ENCODE measurements at regions of chr6 and their contacts with region 1.

Region 1: GRCh38 chr6:3654436-3655297 is 96.8 kb downstream of the PXDC1 start:
- DNase-seq: no peak
- H3K4me3 ChIP-seq: no peak overlapping the region
- H3K4me3 Mint-ChIP-seq: no peak overlapping the region
- H3K27ac Mint-ChIP-seq: no peak overlapping the region
- H3K4me1 ChIP-seq: peaks cover under 1% of the 10 kb centered on the region; the same call in 1 of the 2 replicates
- H3K4me1 Mint-ChIP-seq: peaks cover 3% of the 10 kb centered on the region
- H3K27me3 ChIP-seq: no peaks in the 10 kb centered on the region
- H3K27me3 Mint-ChIP-seq: no peaks in the 10 kb centered on the region
- CTCF ChIP-seq: no peak

Region 2: DNA sequence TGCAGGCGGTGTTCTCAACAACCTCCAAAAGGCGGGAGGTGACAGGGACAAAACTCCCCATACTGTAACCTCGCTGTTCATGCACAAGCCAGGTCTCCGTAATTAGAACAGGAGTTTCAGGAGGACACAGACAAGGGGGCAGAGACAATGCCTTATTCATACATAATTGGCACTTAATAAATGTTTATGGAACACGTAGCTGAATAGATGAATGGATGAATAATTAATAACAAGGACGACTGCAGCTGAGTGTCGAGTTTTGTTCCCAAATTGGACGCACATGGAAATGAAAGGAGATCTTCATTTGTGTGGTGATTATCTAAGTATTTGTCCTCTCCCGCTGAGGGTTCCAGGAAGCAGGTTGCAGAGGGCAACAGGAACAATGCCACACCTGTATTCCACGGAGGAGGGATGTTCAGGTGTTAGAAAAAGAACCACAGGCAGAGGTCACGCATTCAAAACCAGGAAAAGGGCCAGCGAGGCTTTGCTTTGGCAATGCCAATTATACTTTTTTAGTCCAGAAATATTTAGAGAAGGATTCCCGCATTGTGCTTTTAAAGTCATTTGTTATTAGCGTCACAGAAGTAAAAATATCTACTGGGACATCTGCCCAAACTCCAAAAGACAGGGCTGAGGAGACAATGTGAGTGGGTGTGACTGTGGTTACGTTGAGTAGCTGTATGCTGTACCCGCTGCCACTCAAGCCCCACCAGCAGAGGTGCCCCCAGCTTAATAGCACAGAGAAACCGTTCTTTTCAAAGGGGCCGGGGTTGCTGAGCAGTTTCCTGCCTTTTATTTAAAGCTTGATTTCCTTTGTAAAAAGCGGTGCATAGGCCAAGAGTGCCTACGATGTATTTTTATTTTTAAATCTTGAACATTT is 26.5 kb before region 1 on chr6:
- CTCF ChIA-PET with region 1: no interaction called
- POLR2A ChIA-PET with region 1: no interaction called
- intact Hi-C with region 1: loop called (anchors 1 kb)
- DNase-seq: no peak
- H3K4me3 ChIP-seq: no peak overlapping the region
- H3K4me3 Mint-ChIP-seq: no peak overlapping the region
- H3K27ac Mint-ChIP-seq: no peak overlapping the region
- H3K4me1 ChIP-seq: no peaks in the 10 kb centered on the region
- H3K4me1 Mint-ChIP-seq: peaks cover 16% of the 10 kb centered on the region
- H3K27me3 ChIP-seq: no peaks in the 10 kb centered on the region
- H3K27me3 Mint-ChIP-seq: no peaks in the 10 kb centered on the region
- CTCF ChIP-seq: no peak

Measured in Caco-2 (cell line).